ENCODE measurements at regions of chr2 and their contacts with region 1.

Region 1: DNA sequence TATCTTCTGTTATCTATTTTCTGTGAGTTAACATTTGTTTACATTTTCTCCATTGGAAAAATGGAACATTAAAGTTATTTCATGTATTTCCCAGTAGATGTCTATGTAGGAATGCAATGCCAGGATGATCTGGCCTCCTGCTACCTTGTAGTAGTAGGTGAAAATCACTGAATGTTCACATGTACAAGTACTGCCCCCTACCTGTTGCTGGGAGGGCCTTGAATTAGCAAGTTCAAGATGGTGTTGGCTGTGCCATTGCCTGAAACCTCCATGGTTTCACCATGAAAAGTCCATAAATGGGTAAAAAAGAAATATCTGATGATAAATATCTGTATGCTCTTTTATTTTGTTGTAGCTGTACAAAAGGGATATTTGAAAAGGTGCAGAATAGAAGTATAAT is 30.7 kb downstream of the XRCC5 start:
- DNase-seq: no peak
- ATAC-seq: no peak
- H3K4me3 ChIP-seq: no peak overlapping the region
- H3K27ac ChIP-seq: no peak overlapping the region
- H3K4me1 ChIP-seq: no peaks in the 10 kb centered on the region
- H3K27me3 ChIP-seq: no peaks in the 10 kb centered on the region
- CTCF ChIP-seq: no peak

Region 2: DNA sequence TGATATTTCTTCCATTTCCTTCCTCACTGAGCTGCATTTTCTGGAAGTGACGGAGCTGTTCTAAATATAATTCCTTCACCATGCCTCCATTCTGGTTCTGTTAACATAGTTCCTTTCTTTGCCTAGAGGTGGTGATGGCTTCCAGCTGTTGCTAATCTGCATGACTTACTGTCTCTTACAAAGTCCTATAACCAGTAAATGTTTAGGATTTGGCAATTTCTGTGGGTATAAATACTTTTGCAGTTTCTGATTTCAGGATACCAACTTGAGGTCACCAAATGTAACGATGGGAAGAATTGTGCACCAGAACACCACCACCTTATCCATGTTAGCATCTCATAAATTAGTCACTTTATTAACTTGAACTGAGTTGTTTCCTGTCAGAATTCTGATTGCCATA is 602.3 kb before region 1 on chr2:
- intact Hi-C with region 1: loop called in 1 of 2 experiments (anchors 5 kb)
- DNase-seq: no peak
- ATAC-seq: no peak
- H3K4me3 ChIP-seq: no peak overlapping the region
- H3K27ac ChIP-seq: no peak overlapping the region
- H3K4me1 ChIP-seq: no peaks in the 10 kb centered on the region
- H3K27me3 ChIP-seq: no peaks in the 10 kb centered on the region
- CTCF ChIP-seq: no peak

Measured in psoas muscle (tissue), 8 donors.